GM13977 (cell line): ENCODE measurements at regions of chr14 and their contacts with region 1.

Region 1: DNA sequence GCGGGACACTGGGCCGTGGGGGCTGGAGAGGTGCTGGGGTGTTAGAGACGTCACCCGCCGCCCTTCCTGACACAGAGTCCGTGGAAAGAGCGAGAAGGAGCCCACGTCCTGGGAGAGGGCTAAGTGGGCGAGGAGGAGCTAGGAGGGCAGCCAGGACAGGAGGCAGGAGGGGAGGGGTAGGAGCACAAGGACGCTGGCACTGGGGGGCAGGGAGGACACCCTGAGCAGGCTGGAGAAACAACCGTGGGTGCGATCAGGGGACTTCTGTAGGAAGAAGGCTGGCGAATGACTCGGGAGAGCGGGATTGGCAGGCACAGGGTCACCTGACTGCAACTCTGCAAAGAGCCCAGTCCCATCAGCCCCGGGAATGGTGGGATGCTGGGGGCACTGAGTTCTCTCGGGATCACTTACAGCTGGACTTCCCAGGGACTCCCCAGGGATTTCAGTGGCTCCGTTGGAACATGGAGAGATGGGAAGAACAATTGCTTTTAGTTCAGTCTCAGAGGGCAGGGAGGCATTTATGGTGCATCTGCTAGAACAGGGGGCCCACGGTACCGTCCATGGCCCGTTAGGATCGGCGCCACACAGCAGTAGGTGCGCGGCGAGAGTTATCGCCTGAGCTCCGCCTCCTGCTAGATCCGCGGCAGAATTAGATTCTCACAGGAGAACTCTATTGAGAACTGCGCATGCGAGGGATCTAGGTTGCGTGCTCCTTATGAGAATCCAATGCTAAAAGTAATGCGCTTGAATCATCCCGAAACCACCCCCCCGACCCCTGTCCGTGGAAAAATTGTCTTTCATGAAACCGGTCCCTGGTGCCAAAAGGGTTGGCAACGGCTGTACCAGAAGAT is 24.3 kb downstream of the UBR7 start:
- DNase-seq: peak; percentile 40
- CTCF ChIP-seq: no peak

Region 2: GRCh38 chr14:92973798-92974399 is 257.5 kb before region 1 on chr14:
- in situ Hi-C with region 1: no loop called
- DNase-seq: no peak
- CTCF ChIP-seq: no peak

Region 3: DNA sequence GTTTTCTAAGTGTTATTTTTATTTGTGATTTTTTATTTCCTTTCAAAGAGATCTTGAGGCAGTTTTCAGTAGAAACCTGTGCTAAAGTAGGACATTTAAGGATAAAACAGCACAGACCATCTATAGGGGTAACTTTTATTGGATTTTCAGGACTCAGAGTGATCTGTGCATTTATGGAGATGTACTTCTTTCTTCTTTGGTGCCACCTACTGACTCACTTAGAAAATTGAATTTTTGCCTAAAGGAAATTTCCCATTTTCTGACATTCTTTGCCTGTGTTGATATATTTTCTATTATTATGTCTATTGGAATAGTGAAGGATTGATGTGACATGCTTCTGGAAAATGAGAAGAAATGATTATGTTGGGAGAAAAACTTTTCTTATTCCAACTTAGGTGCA is 312.4 kb after region 1 on chr14:
- in situ Hi-C with region 1: loop called (anchors 25 kb)
- DNase-seq: peak; percentile 14
- CTCF ChIP-seq: peak; percentile 48